PC-9 (cell line): ENCODE measurements at regions of chr11 and their contacts with region 1.

Region 1: GRCh38 chr11:67583247-67584204 is at the start of gene GSTP1:
- DNase-seq: peak; percentile 75 to 94
- H3K4me3 ChIP-seq: peak within 1 kb of the TSS; percentile 82
- H3K27ac ChIP-seq: peak within 1 kb of the TSS; percentile 69
- H3K4me1 ChIP-seq: peaks cover 52% of the 10 kb centered on the region
- H3K27me3 ChIP-seq: no peaks in the 10 kb centered on the region
- CTCF ChIP-seq: peak; percentile 78
- total RNA-seq, gene GSTP1: 2,063 and 2,645 TPM in 2 replicates

Region 2: GRCh38 chr11:67606492-67607201 is 23.1 kb after region 1 on chr11 and contains the start of gene NDUFV1:
- CTCF ChIA-PET with region 1: no interaction called
- POLR2A ChIA-PET with region 1: interaction called, 3 read pairs
- intact Hi-C with region 1: loop called (anchors 1 kb)
- DNase-seq: peak; percentile 87 to 98
- H3K4me3 ChIP-seq: peak within 1 kb of the TSS; percentile 98
- H3K27ac ChIP-seq: no peak within 1 kb of the TSS
- H3K4me1 ChIP-seq: peaks cover 12% of the 10 kb centered on the region
- H3K27me3 ChIP-seq: 0 out of 2 replicates have a peak, but pooled peaks cover 4% of the 10 kb centered on the region
- CTCF ChIP-seq: peak; percentile 57
- total RNA-seq, gene NDUFV1: 321 and 463 TPM in 2 replicates

Region 3: DNA sequence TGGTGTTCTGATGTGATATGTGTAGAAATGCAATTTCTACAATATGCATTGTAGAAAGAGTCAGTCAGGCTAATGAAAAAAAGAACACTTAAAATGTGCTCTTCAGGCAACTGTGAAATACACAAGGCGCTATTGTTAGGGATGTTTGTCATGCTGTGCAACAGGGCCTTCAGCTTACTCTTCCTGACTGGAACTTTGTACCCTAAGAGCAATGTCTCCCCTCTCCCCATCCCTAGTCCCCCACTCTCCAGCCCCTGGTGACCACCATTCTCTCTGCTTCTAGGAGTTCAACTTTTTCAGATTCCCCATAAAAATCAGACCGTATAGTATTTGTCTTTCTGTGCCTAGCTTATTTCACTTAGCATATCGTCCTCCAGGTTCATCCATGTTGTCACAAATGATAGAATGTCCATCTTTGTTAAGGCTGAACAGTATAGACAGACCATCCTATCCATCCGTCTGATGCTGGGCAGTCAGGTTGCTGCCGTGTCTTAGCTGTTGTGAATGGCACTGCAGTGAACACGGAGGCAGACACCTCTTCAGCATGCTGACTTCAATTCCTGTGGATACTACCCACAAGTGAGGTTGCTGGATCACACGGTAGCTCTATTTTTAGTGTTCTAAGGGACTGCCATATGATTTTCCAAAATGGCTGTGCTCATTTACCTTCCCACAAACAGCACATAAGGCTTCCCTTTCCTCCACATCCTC is 33.9 kb after region 1 on chr11:
- CTCF ChIA-PET with region 1: no interaction called
- POLR2A ChIA-PET with region 1: no interaction called
- intact Hi-C with region 1: no loop called
- DNase-seq: no peak
- H3K4me3 ChIP-seq: no peak overlapping the region
- H3K27ac ChIP-seq: no peak overlapping the region
- H3K4me1 ChIP-seq: no peaks in the 10 kb centered on the region
- H3K27me3 ChIP-seq: no peaks in the 10 kb centered on the region
- CTCF ChIP-seq: no peak

Region 4: GRCh38 chr11:67630228-67630942 is 46.9 kb after region 1 on chr11:
- CTCF ChIA-PET with region 1: interaction called, 4 read pairs
- POLR2A ChIA-PET with region 1: interaction called, 9 read pairs
- intact Hi-C with region 1: loop called (anchors 2 kb)
- DNase-seq: peak; percentile 93 to 100
- H3K4me3 ChIP-seq: peak overlapping the region; percentile 87
- H3K27ac ChIP-seq: peak overlapping the region; percentile 50
- H3K4me1 ChIP-seq: peaks cover 8% of the 10 kb centered on the region
- H3K27me3 ChIP-seq: no peaks in the 10 kb centered on the region
- CTCF ChIP-seq: peak; percentile 93

Region 5: DNA sequence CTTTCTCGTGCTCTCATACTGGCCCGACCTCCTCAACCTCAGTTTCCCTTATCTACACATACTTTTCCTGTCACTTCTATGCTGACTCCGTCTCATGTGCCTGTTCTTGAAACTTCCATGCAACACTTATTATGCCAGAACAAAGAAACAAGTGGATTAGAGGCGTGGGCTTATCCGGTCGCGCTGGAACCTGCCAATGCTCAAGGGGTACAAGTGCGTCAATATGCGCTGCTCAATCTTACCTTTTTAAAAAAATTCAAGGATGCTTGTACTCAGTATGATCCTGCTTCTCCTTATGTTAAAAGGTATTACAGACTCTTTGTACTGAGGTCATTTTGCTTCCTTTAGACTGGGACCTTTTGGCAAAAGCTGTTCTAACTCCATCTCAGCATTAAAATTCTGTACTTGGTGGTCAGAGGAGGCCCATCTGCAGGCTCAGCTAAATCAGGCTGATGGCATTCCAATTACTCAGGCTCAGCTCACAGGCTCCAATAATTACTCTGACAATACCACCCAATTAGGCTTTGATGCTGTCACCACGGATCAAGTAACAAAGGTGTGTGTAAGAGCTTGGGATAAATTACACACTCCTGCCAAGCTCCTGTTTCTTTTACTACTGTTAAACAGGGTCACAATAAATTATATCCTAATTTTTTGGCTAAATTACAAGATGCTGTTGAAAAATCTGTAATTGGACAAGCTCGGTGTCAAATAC is 117.2 kb after region 1 on chr11:
- CTCF ChIA-PET with region 1: no interaction called
- POLR2A ChIA-PET with region 1: no interaction called
- intact Hi-C with region 1: no loop called
- DNase-seq: peak in 1 of 2 experiments; percentile 41
- H3K4me3 ChIP-seq: no peak overlapping the region
- H3K27ac ChIP-seq: peak overlapping the region; percentile 44; the same call in 1 of the 2 replicates
- H3K4me1 ChIP-seq: peaks cover 47% of the 10 kb centered on the region
- H3K27me3 ChIP-seq: no peaks in the 10 kb centered on the region
- CTCF ChIP-seq: no peak

Region 6: DNA sequence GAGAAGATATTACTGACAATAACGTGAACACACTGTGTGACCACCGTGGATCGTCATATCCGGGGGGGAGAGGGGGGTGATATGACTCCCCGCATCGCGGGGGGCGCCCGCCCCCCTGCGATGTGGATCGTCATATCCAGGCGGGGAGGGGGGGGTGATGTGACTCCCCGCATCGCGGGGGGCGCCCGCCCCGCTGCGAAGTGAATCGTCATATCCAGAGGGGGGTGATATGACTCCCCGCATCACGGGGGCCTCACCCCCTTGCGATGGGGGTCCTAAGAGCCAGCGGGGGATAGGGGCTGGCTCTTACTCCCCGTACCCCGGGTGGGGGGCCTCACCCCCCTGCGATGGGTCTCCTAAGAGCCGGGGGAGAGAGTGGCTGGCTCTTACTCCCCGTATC is 400.4 kb after region 1 on chr11:
- CTCF ChIA-PET with region 1: no interaction called
- POLR2A ChIA-PET with region 1: interaction called, 10 read pairs
- intact Hi-C with region 1: no loop called
- DNase-seq: no peak
- H3K4me3 ChIP-seq: no peak overlapping the region
- H3K27ac ChIP-seq: no peak overlapping the region
- H3K4me1 ChIP-seq: peaks cover 26% of the 10 kb centered on the region
- H3K27me3 ChIP-seq: no peaks in the 10 kb centered on the region
- CTCF ChIP-seq: no peak